CD8-positive, alpha-beta T cell (primary cell): ENCODE measurements at regions of chr16 and their contacts with region 1.

Region 1: GRCh38 chr16:76854234-76854633 is 336.8 kb upstream of the MON1B start:
- DNase-seq: no peak
- ATAC-seq: no peak
- H3K4me3 ChIP-seq: no peak overlapping the region
- H3K4me3 Mint-ChIP-seq: no peak overlapping the region
- H3K27ac ChIP-seq: no peak overlapping the region
- H3K27ac Mint-ChIP-seq: no peak overlapping the region
- H3K4me1 ChIP-seq: no peaks in the 10 kb centered on the region
- H3K4me1 Mint-ChIP-seq: no peaks in the 10 kb centered on the region
- H3K27me3 ChIP-seq: no peaks in the 10 kb centered on the region
- H3K27me3 Mint-ChIP-seq: no peaks in the 10 kb centered on the region
- CTCF ChIP-seq: no peak

Region 2: GRCh38 chr16:76866994-76867393 is 12.8 kb after region 1 on chr16:
- CTCF ChIA-PET with region 1: no interaction called
- POLR2A ChIA-PET with region 1: no interaction called
- intact Hi-C with region 1: no loop called
- DNase-seq: no peak
- ATAC-seq: no peak
- H3K4me3 ChIP-seq: no peak overlapping the region
- H3K4me3 Mint-ChIP-seq: no peak overlapping the region
- H3K27ac ChIP-seq: no peak overlapping the region
- H3K27ac Mint-ChIP-seq: no peak overlapping the region
- H3K4me1 ChIP-seq: no peaks in the 10 kb centered on the region
- H3K4me1 Mint-ChIP-seq: no peaks in the 10 kb centered on the region
- H3K27me3 ChIP-seq: no peaks in the 10 kb centered on the region
- H3K27me3 Mint-ChIP-seq: no peaks in the 10 kb centered on the region
- CTCF ChIP-seq: no peak

Region 3: GRCh38 chr16:76879420-76879819 is 25.2 kb after region 1 on chr16:
- CTCF ChIA-PET with region 1: no interaction called
- POLR2A ChIA-PET with region 1: no interaction called
- intact Hi-C with region 1: no loop called
- DNase-seq: no peak
- ATAC-seq: no peak
- H3K4me3 ChIP-seq: no peak overlapping the region
- H3K4me3 Mint-ChIP-seq: no peak overlapping the region
- H3K27ac ChIP-seq: no peak overlapping the region
- H3K27ac Mint-ChIP-seq: no peak overlapping the region
- H3K4me1 ChIP-seq: no peaks in the 10 kb centered on the region
- H3K4me1 Mint-ChIP-seq: no peaks in the 10 kb centered on the region
- H3K27me3 ChIP-seq: no peaks in the 10 kb centered on the region
- H3K27me3 Mint-ChIP-seq: no peaks in the 10 kb centered on the region
- CTCF ChIP-seq: no peak

Region 4: GRCh38 chr16:77509796-77510195 is 655.6 kb after region 1 on chr16:
- CTCF ChIA-PET with region 1: no interaction called
- POLR2A ChIA-PET with region 1: no interaction called
- intact Hi-C with region 1: loop called in 1 of 2 experiments (anchors 5 kb)
- DNase-seq: no peak
- ATAC-seq: no peak
- H3K4me3 ChIP-seq: no peak overlapping the region
- H3K4me3 Mint-ChIP-seq: no peak overlapping the region
- H3K27ac ChIP-seq: no peak overlapping the region
- H3K27ac Mint-ChIP-seq: no peak overlapping the region
- H3K4me1 ChIP-seq: no peaks in the 10 kb centered on the region
- H3K4me1 Mint-ChIP-seq: no peaks in the 10 kb centered on the region
- H3K27me3 ChIP-seq: no peaks in the 10 kb centered on the region
- H3K27me3 Mint-ChIP-seq: peaks cover 5% of the 10 kb centered on the region
- CTCF ChIP-seq: no peak